Right ventricle myocardium inferior (tissue), 1 donor: ENCODE measurements at regions of chr2 and their contacts with region 1.

Region 1: DNA sequence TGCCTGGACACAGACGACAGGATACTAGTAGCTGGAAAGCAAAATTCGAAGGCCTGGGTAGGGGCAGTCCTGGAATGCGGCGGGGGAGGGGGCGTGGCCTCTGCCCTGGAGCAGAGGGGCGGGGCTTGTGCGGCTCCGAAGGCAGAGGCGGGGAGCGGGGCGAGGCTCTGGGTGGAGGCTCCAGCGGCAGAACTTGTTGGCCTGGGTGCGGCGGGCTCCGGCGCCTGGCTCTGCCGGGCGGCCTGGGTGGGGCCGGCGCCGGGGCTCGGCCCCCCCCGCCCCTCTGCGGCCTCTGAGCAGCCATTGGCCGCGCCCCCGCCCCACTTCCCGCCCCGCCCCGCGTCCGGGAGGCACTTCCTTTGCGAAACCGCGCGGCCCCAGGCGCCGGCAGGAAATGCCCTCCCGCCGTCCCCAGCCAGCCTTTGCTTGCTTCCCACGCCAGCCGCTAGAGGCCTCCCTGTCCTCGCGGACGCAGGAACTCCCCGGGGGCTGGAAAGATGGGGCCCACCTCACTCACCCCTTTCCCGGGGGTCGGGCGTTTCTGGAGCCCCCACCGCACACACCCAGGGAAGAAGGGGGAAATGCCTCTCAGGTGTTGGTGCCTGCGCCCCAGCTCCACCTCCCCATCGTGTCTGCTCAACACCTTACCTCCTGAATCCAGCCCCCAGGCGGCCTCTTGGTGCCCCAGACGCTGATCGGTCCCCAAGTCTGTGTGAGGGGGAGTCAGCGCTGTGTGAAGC is 6.7 kb downstream of the CTDSP1 start:
- DNase-seq: peak; percentile 98
- ATAC-seq: peak; percentile 88

Region 2: DNA sequence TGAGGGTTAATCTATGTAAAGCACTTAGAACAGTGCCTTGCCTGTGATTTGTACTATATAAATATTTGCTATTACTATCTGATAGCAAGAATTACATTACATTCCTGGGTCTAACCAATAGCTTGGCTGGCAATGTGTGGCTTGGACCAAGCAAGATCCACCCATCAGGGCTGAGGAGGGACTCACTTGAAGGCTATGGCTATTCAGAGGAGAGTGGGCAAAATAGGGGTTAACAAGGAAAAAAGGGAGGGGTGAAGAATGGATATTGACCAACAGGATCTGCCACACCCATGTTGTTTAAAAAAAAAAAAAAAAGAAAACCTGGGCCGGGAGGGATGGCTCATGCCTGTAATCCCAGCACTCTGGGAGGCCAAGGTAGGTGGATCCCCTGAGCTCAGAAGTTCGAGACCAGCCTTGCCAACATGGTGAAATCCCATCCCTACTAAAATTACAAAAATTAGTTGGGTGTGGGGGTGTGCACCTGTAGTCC is 94.1 kb before region 1 on chr2:
- intact Hi-C with region 1: no loop called
- DNase-seq: no peak
- ATAC-seq: no peak

Region 3: DNA sequence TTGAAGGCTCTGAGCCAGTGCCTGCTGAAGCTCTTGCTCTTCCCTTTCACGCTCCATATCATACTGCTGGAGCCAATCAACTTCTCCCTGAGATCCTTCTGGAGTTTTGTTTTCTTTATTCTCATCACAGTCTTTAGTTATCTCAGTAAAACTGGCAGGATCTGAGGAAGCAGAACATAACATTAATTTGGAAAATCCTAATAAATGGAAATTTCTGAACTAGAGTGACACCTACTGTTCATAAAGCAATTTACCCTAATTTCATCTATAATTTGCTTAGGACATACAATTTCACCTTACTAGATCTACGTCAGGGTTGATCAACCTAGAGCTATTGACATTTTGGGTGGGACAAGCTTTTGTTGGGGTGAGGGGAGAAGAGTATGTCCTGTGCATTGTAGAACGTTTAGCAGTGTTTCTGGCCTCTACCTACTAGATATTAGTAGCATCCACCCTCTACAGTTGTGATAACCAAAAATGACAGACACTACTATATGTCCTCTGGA is 59.7 kb after region 1 on chr2:
- intact Hi-C with region 1: loop called (anchors 5 kb)
- DNase-seq: no peak
- ATAC-seq: no peak

Region 4: GRCh38 chr2:218659258-218659987 is 253.0 kb after region 1 on chr2 and contains the starts of genes BCS1L and ZNF142:
- intact Hi-C with region 1: loop called (anchors 5 kb)
- DNase-seq: peak; percentile 96
- ATAC-seq: peak; percentile 96
- total RNA-seq, gene BCS1L: 51.1 TPM
- total RNA-seq, gene ZNF142: 18.6 TPM